Activated naive CD4-positive, alpha-beta T cell treated with anti-CD3 and anti-CD28 coated beads for 36 hours (primary cell): ENCODE measurements at regions of chr1 and their contacts with region 1.

Region 1: GRCh38 chr1:169711469-169712281 is at the start of gene SELL:
- DNase-seq: peak; percentile 91
- H3K4me3 Mint-ChIP-seq: peak within 1 kb of the TSS; percentile 80
- H3K27ac Mint-ChIP-seq: peak within 1 kb of the TSS; percentile 94
- H3K4me1 Mint-ChIP-seq: peaks cover 12% of the 10 kb centered on the region
- H3K27me3 Mint-ChIP-seq: peaks cover 5% of the 10 kb centered on the region
- total RNA-seq, gene SELL: 362 to 365 TPM

Region 2: GRCh38 chr1:168603501-168604110 is 1108.1 kb before region 1 on chr1:
- CTCF ChIA-PET with region 1: no interaction called
- intact Hi-C with region 1: loop called (anchors 5 kb)
- DNase-seq: peak; percentile 84
- H3K4me3 Mint-ChIP-seq: no peak overlapping the region
- H3K27ac Mint-ChIP-seq: no peak overlapping the region
- H3K4me1 Mint-ChIP-seq: no peaks in the 10 kb centered on the region
- H3K27me3 Mint-ChIP-seq: peaks cover 3% of the 10 kb centered on the region

Region 3: GRCh38 chr1:169485544-169486278 is 226.0 kb before region 1 on chr1 and contains the start of gene SLC19A2:
- CTCF ChIA-PET with region 1: interaction called, 3 read pairs
- intact Hi-C with region 1: loop called (anchors 1 kb)
- DNase-seq: peak; percentile 96
- H3K4me3 Mint-ChIP-seq: peak within 1 kb of the TSS; percentile 89
- H3K27ac Mint-ChIP-seq: peak within 1 kb of the TSS; percentile 80
- H3K4me1 Mint-ChIP-seq: peaks cover 48% of the 10 kb centered on the region
- H3K27me3 Mint-ChIP-seq: no peaks in the 10 kb centered on the region
- total RNA-seq, gene SLC19A2: 3.2 to 3.6 TPM

Region 4: DNA sequence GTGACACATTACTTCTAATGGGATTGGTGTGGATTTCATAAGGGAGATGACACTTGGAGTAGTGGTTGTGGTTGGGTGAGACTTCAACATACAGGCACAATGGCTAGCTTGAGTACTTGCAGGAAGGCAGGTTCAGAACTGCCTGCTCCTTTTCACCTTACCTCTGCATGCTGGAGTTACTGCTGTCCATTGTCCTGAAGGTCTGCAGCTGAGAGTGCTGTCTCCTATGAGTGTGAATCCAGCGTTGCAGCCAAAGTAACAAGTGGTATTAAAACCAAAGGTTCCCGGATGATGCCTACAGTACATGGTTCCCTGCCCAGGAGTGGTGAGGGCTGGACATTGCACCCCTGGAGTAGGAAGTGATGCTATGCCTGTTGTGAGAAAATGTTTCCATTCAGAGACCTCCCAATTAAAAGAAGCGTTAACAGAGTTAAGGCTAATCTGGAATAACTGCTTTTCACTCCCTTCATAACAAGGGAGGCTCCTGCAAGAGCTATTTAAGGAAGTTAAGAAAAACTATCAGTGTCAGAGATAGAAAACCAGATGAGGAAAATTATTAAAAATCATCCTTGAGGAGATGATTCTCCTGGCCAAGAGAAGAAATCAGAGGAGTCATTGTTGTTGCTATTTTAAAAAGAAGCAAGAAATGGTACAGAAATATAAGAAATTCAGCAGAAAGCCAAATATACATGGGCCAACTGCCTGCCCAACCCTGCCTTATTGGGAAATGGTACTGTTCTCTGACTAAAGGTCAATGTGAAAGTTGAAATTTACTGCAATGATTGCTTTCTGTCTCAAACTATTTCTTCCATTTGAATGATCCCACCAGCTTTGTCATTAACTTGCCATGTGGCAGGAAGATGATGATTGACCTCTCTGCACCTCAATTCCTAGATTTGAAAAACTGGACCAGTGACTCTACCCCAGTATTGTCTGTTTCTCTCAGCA is 115.6 kb before region 1 on chr1:
- CTCF ChIA-PET with region 1: interaction called, 262 read pairs
- intact Hi-C with region 1: loop called (anchors 1 kb)
- DNase-seq: peak; percentile 70
- H3K4me3 Mint-ChIP-seq: no peak overlapping the region
- H3K27ac Mint-ChIP-seq: no peak overlapping the region
- H3K4me1 Mint-ChIP-seq: peaks cover 63% of the 10 kb centered on the region
- H3K27me3 Mint-ChIP-seq: no peaks in the 10 kb centered on the region

Region 5: GRCh38 chr1:169648709-169649108 is 63.0 kb before region 1 on chr1:
- CTCF ChIA-PET with region 1: interaction called, 5 read pairs
- intact Hi-C with region 1: loop called (anchors 2 kb)
- DNase-seq: no peak
- H3K4me3 Mint-ChIP-seq: peak overlapping the region; percentile 58
- H3K27ac Mint-ChIP-seq: peak overlapping the region; percentile 95
- H3K4me1 Mint-ChIP-seq: peaks cover 40% of the 10 kb centered on the region
- H3K27me3 Mint-ChIP-seq: no peaks in the 10 kb centered on the region

Region 6: DNA sequence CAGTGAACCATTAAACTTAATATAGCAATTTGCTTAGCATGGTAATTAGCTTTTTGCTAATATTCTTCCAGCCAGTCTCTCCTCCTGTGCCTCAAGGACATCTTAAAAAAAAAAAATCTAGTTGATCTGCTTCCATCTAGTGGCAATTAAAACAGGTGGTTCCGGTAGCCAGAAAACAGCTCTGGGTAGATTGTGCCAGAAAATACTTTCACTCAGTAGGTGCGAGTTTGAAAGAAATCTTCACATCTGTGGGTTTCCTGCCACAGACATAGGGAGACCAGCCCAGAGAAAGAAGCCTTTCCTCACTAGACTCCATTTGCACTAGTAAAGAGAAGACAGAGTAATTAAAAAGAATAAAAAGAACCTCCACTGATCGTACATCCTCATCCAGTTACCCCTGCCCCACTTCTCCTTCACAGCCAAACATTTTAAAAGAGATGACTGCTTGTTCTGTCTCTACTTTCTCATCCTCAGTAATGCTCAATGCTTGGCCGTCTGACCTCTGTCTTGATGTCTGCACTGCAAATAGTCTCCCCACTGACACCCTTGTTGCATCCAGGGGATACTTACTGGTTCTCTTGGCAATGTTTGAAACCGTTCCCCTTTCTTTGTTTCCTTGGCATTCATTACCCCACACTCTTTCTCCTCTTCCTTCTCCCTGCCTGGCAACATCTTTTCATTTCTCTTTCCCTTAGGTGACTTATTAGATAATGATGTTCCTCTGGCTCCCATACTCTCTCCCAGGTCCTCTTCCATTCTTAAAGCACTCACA is 17.2 kb before region 1 on chr1:
- CTCF ChIA-PET with region 1: interaction called, 161 read pairs
- intact Hi-C with region 1: loop called (anchors 1 kb)
- DNase-seq: peak; percentile 59
- H3K4me3 Mint-ChIP-seq: peak overlapping the region; percentile 32
- H3K27ac Mint-ChIP-seq: peak overlapping the region; percentile 94
- H3K4me1 Mint-ChIP-seq: peaks cover 96% of the 10 kb centered on the region
- H3K27me3 Mint-ChIP-seq: no peaks in the 10 kb centered on the region

Region 7: DNA sequence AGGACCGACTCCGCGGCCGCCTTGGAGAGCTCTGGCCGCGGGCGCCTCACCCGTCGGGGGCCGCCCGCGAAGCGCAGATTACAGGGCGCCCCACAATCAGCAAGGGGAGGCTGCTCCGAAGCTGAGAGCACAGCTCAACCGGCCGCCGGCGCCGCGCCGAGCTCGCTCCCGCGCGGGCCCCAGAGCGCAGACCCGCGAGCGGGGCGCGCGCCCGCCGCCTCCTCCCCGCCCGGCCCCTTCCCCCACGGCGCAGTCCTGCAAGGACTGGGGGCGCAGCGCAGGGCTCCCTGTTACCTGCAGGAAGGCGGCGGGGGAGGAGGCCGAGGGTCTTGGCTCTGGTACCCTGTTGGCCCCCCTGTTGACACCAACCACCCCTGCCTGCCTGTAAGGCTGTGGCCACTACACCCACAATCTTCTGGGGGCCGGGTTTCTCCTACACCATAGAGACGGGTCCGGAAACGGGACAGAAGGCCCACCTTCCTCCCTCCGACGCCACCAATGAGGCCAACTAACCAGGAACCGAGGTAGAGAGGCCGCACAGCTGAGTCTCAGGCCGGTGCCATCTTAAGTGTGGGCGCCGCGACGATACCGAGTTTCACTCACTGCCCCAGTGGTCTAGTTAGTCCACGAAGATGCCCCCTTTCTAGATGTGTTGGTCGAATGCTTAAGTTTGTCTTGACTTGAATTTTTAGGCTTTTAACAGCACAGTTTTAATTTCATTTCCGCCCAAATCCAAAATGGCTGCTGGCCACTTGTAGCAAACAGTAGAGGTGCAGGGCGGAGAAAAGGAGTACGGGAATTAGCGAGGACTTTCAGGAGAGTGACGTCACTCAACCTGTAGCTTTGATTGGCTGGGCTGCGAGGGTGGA is 182.1 kb after region 1 on chr1 and contains the start of gene SCYL3:
- CTCF ChIA-PET with region 1: no interaction called
- intact Hi-C with region 1: loop called (anchors 1 kb)
- DNase-seq: peak; percentile 94
- H3K4me3 Mint-ChIP-seq: peak within 1 kb of the TSS; percentile 87
- H3K27ac Mint-ChIP-seq: peak within 1 kb of the TSS; percentile 100
- H3K4me1 Mint-ChIP-seq: peaks cover 34% of the 10 kb centered on the region
- H3K27me3 Mint-ChIP-seq: no peaks in the 10 kb centered on the region
- total RNA-seq, gene SCYL3: 8.8 TPM